ENCODE measurements at regions of chr18 and their contacts with region 1.

Region 1: GRCh38 chr18:5057386-5058348 is 139.4 kb downstream of the AKAIN1 start:
- DNase-seq: peak; percentile 52
- ATAC-seq: peak; percentile 89
- H3K4me3 ChIP-seq: no peak overlapping the region
- H3K27ac ChIP-seq: no peak overlapping the region
- H3K4me1 ChIP-seq: no peaks in the 10 kb centered on the region
- H3K27me3 ChIP-seq: no peaks in the 10 kb centered on the region
- CTCF ChIP-seq: peak; percentile 83
- EP300 ChIP-seq: no peak
- POLR2A ChIP-seq: no peak
- RAD21 ChIP-seq: peak; percentile 77

Region 2: DNA sequence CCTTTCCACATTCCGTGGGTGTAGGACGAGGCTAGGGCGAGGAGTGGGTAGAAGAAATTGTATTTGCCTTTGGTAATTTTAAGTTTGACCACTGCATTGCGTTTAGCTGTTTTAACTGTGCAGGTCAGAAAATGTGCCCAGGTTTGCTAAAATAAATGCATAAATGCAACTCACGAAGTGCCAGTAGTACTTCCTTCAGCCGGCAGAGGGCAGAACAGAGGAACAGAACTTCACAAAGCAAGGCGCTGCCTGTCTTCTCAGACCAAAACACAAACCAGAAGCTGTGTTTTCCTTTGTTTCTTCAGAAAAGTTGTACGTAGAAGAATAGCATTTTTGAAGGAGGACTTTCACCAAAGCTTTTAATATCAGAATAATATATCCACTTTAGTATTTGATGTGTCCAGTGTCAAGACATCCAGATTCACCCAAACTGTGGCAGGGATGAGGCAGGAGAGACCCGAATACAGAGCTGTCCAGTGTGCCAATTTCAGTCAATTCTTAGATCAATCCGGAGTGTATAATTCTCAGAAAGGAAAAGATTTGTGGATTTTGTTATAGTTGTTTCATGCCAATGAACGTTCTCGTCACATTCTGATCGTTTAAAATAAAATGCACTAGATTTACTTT is 951.1 kb before region 1 on chr18:
- CTCF ChIA-PET with region 1: interaction called, 15 read pairs
- POLR2A ChIA-PET with region 1: no interaction called
- in situ Hi-C with region 1: loop called (anchors 5 kb)
- intact Hi-C with region 1: no loop called
- DNase-seq: peak; percentile 49
- ATAC-seq: peak; percentile 80
- H3K4me3 ChIP-seq: no peak overlapping the region
- H3K27ac ChIP-seq: no peak overlapping the region
- H3K4me1 ChIP-seq: no peaks in the 10 kb centered on the region
- H3K27me3 ChIP-seq: no peaks in the 10 kb centered on the region
- CTCF ChIP-seq: peak; percentile 82
- EP300 ChIP-seq: no peak
- POLR2A ChIP-seq: no peak
- RAD21 ChIP-seq: no peak

Region 3: GRCh38 chr18:4181882-4182568 is 875.6 kb before region 1 on chr18:
- CTCF ChIA-PET with region 1: interaction called, 8 read pairs
- POLR2A ChIA-PET with region 1: no interaction called
- in situ Hi-C with region 1: loop called (anchors 10 kb)
- intact Hi-C with region 1: loop called (anchors 1 kb)
- DNase-seq: peak; percentile 51
- ATAC-seq: peak; percentile 86
- H3K4me3 ChIP-seq: no peak overlapping the region
- H3K27ac ChIP-seq: no peak overlapping the region
- H3K4me1 ChIP-seq: peaks cover 18% of the 10 kb centered on the region
- H3K27me3 ChIP-seq: no peaks in the 10 kb centered on the region
- CTCF ChIP-seq: peak; percentile 65
- EP300 ChIP-seq: peak in 1 of 2 experiments; percentile 3; a peak in 1 of 4 replicates
- POLR2A ChIP-seq: no peak
- RAD21 ChIP-seq: no peak

Region 4: GRCh38 chr18:4870177-4870773 is 187.4 kb before region 1 on chr18:
- CTCF ChIA-PET with region 1: no interaction called
- POLR2A ChIA-PET with region 1: no interaction called
- in situ Hi-C with region 1: no loop called
- intact Hi-C with region 1: no loop called
- DNase-seq: no peak
- ATAC-seq: no peak
- H3K4me3 ChIP-seq: no peak overlapping the region
- H3K27ac ChIP-seq: no peak overlapping the region
- H3K4me1 ChIP-seq: no peaks in the 10 kb centered on the region
- H3K27me3 ChIP-seq: no peaks in the 10 kb centered on the region
- CTCF ChIP-seq: no peak
- EP300 ChIP-seq: no peak
- POLR2A ChIP-seq: no peak
- RAD21 ChIP-seq: no peak

Region 5: GRCh38 chr18:5571666-5572065 is 514.0 kb after region 1 on chr18:
- CTCF ChIA-PET with region 1: no interaction called
- POLR2A ChIA-PET with region 1: no interaction called
- in situ Hi-C with region 1: no loop called
- intact Hi-C with region 1: no loop called
- DNase-seq: no peak
- ATAC-seq: no peak
- H3K4me3 ChIP-seq: no peak overlapping the region
- H3K27ac ChIP-seq: no peak overlapping the region
- H3K4me1 ChIP-seq: no peaks in the 10 kb centered on the region
- H3K27me3 ChIP-seq: no peaks in the 10 kb centered on the region
- CTCF ChIP-seq: no peak
- EP300 ChIP-seq: no peak
- POLR2A ChIP-seq: no peak
- RAD21 ChIP-seq: no peak

Region 6: DNA sequence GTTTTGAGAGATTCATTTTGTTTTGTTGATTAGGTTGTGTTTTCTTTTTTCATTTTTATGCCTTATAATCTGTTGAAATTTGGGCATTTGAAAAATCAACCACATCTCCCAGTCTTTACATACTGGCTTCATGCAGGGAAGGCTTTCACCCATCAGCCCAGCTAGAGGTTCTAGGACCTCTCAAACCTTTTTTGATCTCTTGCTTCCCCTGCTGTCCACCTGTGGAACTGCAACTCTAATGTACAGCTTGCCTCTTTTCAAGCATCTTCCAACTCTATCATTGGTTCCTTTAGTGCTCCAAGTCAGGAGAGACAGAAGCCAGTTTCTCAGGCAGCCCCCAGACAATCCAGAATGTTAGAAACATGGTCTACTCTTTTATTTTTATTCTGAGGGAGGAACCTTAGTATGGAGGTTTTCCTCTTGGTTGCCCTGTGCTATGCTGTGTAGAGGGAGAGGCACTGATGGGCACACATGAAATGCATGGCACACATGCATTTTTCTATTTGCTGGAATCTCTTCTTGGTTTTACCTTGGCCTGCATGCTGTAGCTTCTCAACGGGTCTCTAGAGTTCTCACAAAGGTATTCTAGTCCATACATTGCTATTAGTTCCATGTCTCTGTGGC is 1464.2 kb after region 1 on chr18:
- CTCF ChIA-PET with region 1: no interaction called
- POLR2A ChIA-PET with region 1: no interaction called
- in situ Hi-C with region 1: loop called (anchors 25 kb)
- intact Hi-C with region 1: no loop called
- DNase-seq: peak; percentile 53
- ATAC-seq: peak; percentile 66
- H3K4me3 ChIP-seq: no peak overlapping the region
- H3K27ac ChIP-seq: no peak overlapping the region
- H3K4me1 ChIP-seq: no peaks in the 10 kb centered on the region
- H3K27me3 ChIP-seq: no peaks in the 10 kb centered on the region
- CTCF ChIP-seq: peak; percentile 82
- EP300 ChIP-seq: no peak
- POLR2A ChIP-seq: no peak
- RAD21 ChIP-seq: no peak

Measured in HepG2 (cell line).